Panc1 (cell line): ENCODE measurements at regions of chr7 and their contacts with region 1.

Region 1: GRCh38 chr7:100556541-100556940 is 17.2 kb downstream of the SAP25 start:
- DNase-seq: no peak
- ATAC-seq: no peak
- H3K4me3 ChIP-seq: no peak overlapping the region
- H3K27ac ChIP-seq: no peak overlapping the region
- H3K4me1 ChIP-seq: no peaks in the 10 kb centered on the region; the same call in 1 of the 2 replicates
- H3K27me3 ChIP-seq: no peaks in the 10 kb centered on the region
- CTCF ChIP-seq: no peak

Region 2: GRCh38 chr7:100478966-100479665 is 77.4 kb before region 1 on chr7 and contains the start of gene TSC22D4:
- CTCF ChIA-PET with region 1: no interaction called
- POLR2A ChIA-PET with region 1: no interaction called
- in situ Hi-C with region 1: no loop called
- intact Hi-C with region 1: loop called (anchors 1 kb)
- DNase-seq: peak; percentile 72
- ATAC-seq: peak; percentile 84
- H3K4me3 ChIP-seq: peak within 1 kb of the TSS; percentile 95 to 97
- H3K27ac ChIP-seq: peak within 1 kb of the TSS; percentile 88
- H3K4me1 ChIP-seq: peaks cover 30% of the 10 kb centered on the region
- H3K27me3 ChIP-seq: no peaks in the 10 kb centered on the region
- CTCF ChIP-seq: no peak
- total RNA-seq, gene TSC22D4: 82.6 TPM

Region 3: DNA sequence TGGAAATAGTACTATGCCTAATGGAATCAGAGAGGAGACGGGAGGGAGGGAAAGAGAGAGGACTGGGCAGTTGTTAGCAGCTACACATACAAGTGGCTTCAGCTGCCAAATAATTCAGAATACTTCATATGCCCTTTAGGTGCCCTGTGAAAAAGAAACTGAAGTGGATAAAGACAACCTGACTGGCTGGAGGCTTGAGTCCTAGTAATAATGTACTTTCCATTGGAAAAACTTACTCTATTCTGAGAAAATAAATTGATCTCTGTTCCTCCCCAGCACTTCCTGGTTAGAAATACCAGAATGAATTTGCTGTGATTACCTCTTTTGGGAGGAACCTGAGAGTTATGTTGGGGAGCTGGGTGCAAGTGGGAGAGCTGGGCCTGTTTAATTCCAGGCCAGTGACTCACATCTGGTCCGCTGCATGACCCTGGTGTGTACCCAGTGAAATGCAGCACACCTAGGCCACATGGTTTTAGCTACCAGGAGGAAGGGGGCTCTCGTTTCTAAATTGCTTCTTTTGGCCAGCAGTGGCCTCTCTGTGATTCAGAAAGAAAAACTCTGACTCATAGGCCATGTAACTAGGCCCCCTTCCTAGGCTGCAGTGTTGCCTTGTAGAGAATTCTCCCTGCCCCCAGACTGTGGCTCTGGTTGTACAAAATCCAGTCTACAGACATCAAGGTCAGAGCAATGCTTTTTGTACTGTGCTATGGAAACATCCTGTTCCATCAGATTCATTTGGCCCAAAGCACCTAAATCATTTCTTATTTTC is 11.0 kb before region 1 on chr7:
- CTCF ChIA-PET with region 1: interaction called, 9 read pairs
- POLR2A ChIA-PET with region 1: interaction called, 11 read pairs
- in situ Hi-C with region 1: no loop called
- intact Hi-C with region 1: no loop called
- DNase-seq: peak; percentile 88
- ATAC-seq: peak; percentile 92
- H3K4me3 ChIP-seq: peak overlapping the region in 1 of 2 experiments; percentile 34; a peak in 2 of 4 replicates
- H3K27ac ChIP-seq: peak overlapping the region; percentile 98
- H3K4me1 ChIP-seq: peaks cover 58% of the 10 kb centered on the region
- H3K27me3 ChIP-seq: no peaks in the 10 kb centered on the region
- CTCF ChIP-seq: no peak

Region 4: GRCh38 chr7:100626530-100627237 is 70.1 kb after region 1 on chr7:
- CTCF ChIA-PET with region 1: no interaction called
- POLR2A ChIA-PET with region 1: no interaction called
- in situ Hi-C with region 1: no loop called
- intact Hi-C with region 1: no loop called
- DNase-seq: no peak
- ATAC-seq: peak; percentile 89
- H3K4me3 ChIP-seq: peak overlapping the region; percentile 23 to 39
- H3K27ac ChIP-seq: no peak overlapping the region
- H3K4me1 ChIP-seq: no peaks in the 10 kb centered on the region
- H3K27me3 ChIP-seq: no peaks in the 10 kb centered on the region
- CTCF ChIP-seq: no peak

Region 5: DNA sequence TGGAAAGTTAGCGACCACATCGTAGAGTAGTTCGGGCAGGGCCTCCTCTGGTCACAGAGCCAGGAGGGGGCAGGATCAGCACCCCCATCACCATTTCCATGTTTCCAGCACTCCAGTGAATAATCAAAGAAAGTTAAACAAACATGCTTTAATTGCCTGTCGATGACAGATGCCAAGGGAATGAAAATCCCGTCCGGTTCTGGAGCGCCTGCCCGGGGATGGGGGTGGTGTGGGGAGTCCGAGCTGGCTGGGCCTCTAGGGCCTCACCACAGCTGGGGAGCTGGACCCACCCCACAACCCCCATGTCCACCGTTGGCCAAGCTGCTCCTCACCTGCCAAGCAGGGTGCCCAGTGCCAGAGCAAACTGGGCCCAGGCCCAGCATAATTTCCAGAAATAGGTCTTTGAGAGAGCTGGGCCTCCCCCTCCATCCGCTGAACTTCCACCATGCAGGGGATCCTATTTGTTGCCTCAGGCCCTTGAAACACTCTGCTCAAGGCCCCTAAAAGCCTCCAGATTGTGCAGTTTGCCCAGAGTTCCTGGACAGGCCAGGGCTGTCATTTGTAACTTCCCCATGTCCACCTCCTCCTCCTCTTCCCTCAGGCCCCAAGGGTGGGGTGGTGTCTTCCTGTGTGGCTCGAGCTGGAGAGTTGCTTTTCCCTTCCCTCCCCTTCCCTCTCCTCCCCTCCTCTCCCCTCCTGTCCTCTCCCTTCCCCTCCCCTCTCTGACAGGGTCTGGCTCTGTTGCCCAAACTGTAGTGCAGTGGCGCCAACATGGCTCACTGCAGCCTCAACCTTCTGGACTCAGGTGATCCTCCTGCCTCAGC is 971.5 kb after region 1 on chr7:
- CTCF ChIA-PET with region 1: interaction called, 13 read pairs
- POLR2A ChIA-PET with region 1: no interaction called
- in situ Hi-C with region 1: no loop called
- intact Hi-C with region 1: no loop called
- DNase-seq: no peak
- ATAC-seq: peak; percentile 88
- H3K4me3 ChIP-seq: no peak overlapping the region
- H3K27ac ChIP-seq: peak overlapping the region; percentile 62
- H3K4me1 ChIP-seq: peaks cover 15% of the 10 kb centered on the region
- H3K27me3 ChIP-seq: no peaks in the 10 kb centered on the region
- CTCF ChIP-seq: no peak